Ovary (tissue), 10 donors: ENCODE measurements at regions of chr6 and their contacts with region 1.

Region 1: DNA sequence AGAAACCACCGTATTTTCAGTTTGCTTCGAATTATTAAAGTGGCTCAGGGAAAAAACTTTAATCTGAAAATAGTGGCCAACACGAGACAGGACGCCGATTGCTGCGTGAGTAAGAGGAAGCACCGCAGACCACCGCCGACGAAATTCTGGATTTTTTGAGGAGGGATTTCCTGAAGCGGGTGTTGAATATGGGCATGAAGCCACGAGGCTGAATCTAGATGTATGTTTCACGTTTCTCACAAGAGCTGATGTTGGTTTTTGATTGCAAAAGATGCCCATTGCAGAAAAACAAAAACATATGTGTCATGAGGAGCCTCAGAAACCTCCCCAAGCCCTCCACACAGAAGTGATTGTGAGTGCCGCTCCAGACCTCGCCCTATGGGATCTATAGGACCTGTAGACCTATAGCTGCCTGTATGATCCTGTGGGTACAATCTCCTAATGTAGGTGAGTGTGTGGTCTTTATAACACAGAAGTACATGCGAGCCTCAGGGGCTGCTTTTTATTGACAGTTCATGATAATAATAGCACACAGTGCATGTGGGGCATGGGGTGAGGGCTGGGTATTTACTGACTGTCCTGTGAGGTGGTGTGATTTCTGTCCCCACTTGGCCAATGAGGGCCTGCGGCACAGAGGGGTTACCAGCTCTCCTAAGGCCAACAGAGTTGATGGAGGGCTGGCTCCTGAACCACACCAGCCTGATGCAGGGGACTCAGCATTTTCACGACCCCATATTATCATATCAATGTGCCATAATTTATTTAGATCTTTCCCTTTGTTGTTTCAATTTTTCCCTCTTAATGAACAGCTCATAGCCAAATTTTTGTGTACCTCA is 243.9 kb downstream of the DLL1 start:
- DNase-seq: peak in 2 of 5 donors; percentile 4 to 6
- H3K4me3 ChIP-seq: no peak overlapping the region
- H3K27ac ChIP-seq: no peak overlapping the region
- H3K4me1 ChIP-seq: no peaks in the 10 kb centered on the region
- H3K27me3 ChIP-seq: no peaks in the 10 kb centered on the region
- CTCF ChIP-seq: no peak
- EP300 ChIP-seq: no peak
- POLR2A ChIP-seq: no peak

Region 2: GRCh38 chr6:169985121-169986015 is 61.6 kb before region 1 on chr6:
- intact Hi-C with region 1: loop called in 1 of 4 experiments (anchors 2 kb)
- DNase-seq: no peak
- H3K4me3 ChIP-seq: no peak overlapping the region
- H3K27ac ChIP-seq: no peak overlapping the region
- H3K4me1 ChIP-seq: no peaks in the 10 kb centered on the region
- H3K27me3 ChIP-seq: no peaks in the 10 kb centered on the region
- CTCF ChIP-seq: no peak
- EP300 ChIP-seq: no peak
- POLR2A ChIP-seq: no peak